ENCODE measurements at regions of chr2 and their contacts with region 1.

Region 1: DNA sequence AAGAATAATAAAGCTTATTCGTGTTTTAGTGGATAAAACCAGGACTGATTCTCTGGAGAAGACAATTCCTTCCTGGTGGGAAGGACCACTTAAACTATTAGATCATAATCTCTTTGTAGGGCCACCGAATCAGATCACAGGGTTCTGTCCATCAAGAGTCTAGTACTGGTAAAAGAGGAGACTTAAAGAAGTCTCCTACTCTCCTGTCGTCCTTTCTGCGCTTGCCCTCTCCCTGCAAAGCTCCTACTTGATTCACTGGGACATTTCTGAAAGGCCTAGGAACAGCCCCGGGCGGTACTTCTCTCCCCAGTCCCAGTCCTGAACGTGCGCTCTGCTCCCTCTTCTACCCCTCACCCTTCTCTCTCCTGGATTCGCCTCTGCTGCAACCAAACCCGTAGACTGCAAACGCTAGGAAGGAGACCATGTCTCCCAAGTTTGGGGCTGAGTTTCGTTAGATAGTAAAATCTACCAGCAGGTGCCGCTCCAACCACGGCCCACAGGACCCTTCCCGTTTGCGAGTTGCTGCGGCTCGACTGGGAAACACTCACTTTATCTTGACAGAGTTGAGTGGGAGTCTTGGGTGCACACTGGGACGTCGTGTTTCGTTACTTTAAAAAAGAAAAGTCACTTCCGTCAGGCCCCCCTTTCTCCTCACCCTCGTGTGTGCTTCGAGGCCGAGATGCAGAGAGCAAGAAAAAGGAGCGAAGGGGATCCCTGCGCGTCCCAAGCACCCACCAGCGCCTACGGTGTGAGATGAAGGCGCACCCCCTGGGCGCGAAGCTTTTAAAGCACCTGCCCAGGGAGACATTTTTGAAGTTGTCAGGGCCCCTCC is 923 bp downstream of the FIGLA start:
- DNase-seq: peak; percentile 58
- ATAC-seq: peak; percentile 96
- H3K4me3 ChIP-seq: no peak overlapping the region
- H3K27ac ChIP-seq: no peak overlapping the region
- H3K4me1 ChIP-seq: peaks cover 18% of the 10 kb centered on the region
- H3K27me3 ChIP-seq: peaks cover 0 to 5% of the 10 kb centered on the region in 2 experiments; a peak in 1 of 5 replicates
- CTCF ChIP-seq: peak; percentile 99
- EP300 ChIP-seq: no peak
- POLR2A ChIP-seq: no peak
- RAD21 ChIP-seq: peak; percentile 95

Region 2: GRCh38 chr2:70656421-70657010 is 133.0 kb before region 1 on chr2:
- CTCF ChIA-PET with region 1: interaction called, 10 read pairs
- POLR2A ChIA-PET with region 1: no interaction called
- in situ Hi-C with region 1: no loop called
- intact Hi-C with region 1: loop called (anchors 1 kb)
- DNase-seq: no peak
- ATAC-seq: no peak
- H3K4me3 ChIP-seq: no peak overlapping the region
- H3K27ac ChIP-seq: no peak overlapping the region
- H3K4me1 ChIP-seq: no peaks in the 10 kb centered on the region
- H3K27me3 ChIP-seq: peaks cover 3 to 40% of the 10 kb centered on the region in 2 experiments; a peak in 3 of 5 replicates
- CTCF ChIP-seq: no peak
- EP300 ChIP-seq: no peak
- POLR2A ChIP-seq: no peak
- RAD21 ChIP-seq: no peak

Region 3: GRCh38 chr2:70861777-70862625 is 72.5 kb after region 1 on chr2:
- CTCF ChIA-PET with region 1: interaction called, 37 read pairs
- POLR2A ChIA-PET with region 1: no interaction called
- in situ Hi-C with region 1: loop called (anchors 5 kb)
- intact Hi-C with region 1: loop called (anchors 1 kb)
- DNase-seq: peak; percentile 76
- ATAC-seq: peak; percentile 89
- H3K4me3 ChIP-seq: no peak overlapping the region
- H3K27ac ChIP-seq: no peak overlapping the region
- H3K4me1 ChIP-seq: peaks cover 25% of the 10 kb centered on the region
- H3K27me3 ChIP-seq: peaks cover 0 to 18% of the 10 kb centered on the region in 2 experiments; a peak in 3 of 5 replicates
- CTCF ChIP-seq: peak; percentile 97
- EP300 ChIP-seq: no peak
- POLR2A ChIP-seq: no peak
- RAD21 ChIP-seq: peak; percentile 87

Region 4: GRCh38 chr2:70919672-70920366 is 130.3 kb after region 1 on chr2:
- CTCF ChIA-PET with region 1: interaction called, 14 read pairs
- POLR2A ChIA-PET with region 1: no interaction called
- in situ Hi-C with region 1: no loop called
- intact Hi-C with region 1: loop called (anchors 2 kb)
- DNase-seq: peak; percentile 80
- ATAC-seq: peak; percentile 88
- H3K4me3 ChIP-seq: no peak overlapping the region
- H3K27ac ChIP-seq: no peak overlapping the region
- H3K4me1 ChIP-seq: peaks cover 22% of the 10 kb centered on the region
- H3K27me3 ChIP-seq: no peaks in the 10 kb centered on the region
- CTCF ChIP-seq: peak; percentile 97
- EP300 ChIP-seq: no peak
- POLR2A ChIP-seq: no peak
- RAD21 ChIP-seq: peak; percentile 95

Region 5: DNA sequence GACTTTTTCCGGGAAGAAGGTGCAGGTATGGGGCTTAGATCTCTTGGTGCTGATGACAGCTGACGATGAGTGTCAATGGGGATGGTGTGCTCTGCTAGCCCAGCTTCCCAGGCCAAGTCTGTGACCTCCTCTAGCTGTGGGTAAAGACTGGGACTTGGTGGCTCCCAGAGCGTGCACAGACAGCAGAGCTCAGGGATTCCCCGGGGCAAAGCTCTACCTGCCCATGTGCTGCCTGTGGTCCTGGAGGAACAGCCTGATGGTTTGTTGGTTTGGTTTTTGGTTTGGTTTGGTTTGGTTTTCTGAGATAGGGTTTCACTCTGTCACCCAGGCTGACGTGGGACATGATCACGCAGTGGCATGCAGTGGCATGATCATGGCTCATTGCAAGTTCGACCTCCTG is 165.4 kb after region 1 on chr2:
- CTCF ChIA-PET with region 1: no interaction called
- POLR2A ChIA-PET with region 1: no interaction called
- in situ Hi-C with region 1: no loop called
- intact Hi-C with region 1: no loop called
- DNase-seq: no peak
- ATAC-seq: no peak
- H3K4me3 ChIP-seq: no peak overlapping the region
- H3K27ac ChIP-seq: no peak overlapping the region
- H3K4me1 ChIP-seq: peaks cover 13% of the 10 kb centered on the region
- H3K27me3 ChIP-seq: peaks cover 1 to 6% of the 10 kb centered on the region in 2 experiments; a peak in 2 of 5 replicates
- CTCF ChIP-seq: no peak
- EP300 ChIP-seq: no peak
- POLR2A ChIP-seq: no peak
- RAD21 ChIP-seq: no peak

Region 6: GRCh38 chr2:71108091-71108490 is 318.6 kb after region 1 on chr2:
- CTCF ChIA-PET with region 1: no interaction called
- POLR2A ChIA-PET with region 1: no interaction called
- in situ Hi-C with region 1: no loop called
- intact Hi-C with region 1: no loop called
- DNase-seq: no peak
- ATAC-seq: no peak
- H3K4me3 ChIP-seq: no peak overlapping the region
- H3K27ac ChIP-seq: no peak overlapping the region
- H3K4me1 ChIP-seq: peaks cover 15% of the 10 kb centered on the region
- H3K27me3 ChIP-seq: no peaks in the 10 kb centered on the region
- CTCF ChIP-seq: no peak
- EP300 ChIP-seq: no peak
- POLR2A ChIP-seq: no peak
- RAD21 ChIP-seq: no peak

Region 7: DNA sequence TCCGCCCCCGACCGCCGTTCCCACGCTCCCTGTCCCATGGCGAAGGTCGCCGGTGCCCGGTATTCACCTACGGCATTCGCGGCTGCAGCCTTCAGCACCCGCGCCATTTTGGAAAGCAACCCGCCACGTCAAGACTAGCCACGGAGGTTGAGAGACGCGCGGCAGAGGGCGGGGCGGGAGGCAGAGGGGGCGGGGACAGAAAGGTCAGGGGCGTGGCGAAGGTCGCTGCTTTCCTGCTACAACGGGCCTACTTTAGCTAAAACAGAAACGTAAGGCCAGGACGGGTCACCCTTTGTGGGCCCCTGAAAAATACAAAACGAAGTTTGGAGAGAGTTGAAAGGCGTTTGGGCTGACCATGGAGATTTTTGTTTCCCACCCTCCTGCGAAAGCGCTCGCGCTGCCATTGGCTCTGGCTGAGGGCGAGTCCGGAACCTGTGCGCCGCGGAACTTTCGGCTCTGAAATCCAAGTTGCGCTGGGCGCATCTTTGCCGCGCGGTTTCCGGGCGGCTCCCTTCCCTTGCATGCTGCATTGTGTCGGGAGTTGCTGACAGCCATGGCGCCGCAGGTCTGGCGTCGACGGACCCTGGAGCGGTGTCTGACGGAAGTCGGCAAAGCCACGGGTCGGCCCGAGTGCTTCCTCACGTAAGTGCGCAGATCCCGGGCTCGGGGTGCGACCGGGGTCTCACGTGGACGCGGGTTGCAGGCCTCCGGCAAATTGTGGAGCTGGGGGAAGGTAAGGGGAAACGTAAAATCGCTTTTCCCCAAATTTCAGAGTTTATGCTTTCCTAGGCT is 340.8 kb after region 1 on chr2 and contains the starts of genes MCEE and MPHOSPH10:
- CTCF ChIA-PET with region 1: no interaction called
- POLR2A ChIA-PET with region 1: no interaction called
- in situ Hi-C with region 1: no loop called
- intact Hi-C with region 1: no loop called
- DNase-seq: peak; percentile 85
- ATAC-seq: peak; percentile 89
- H3K4me3 ChIP-seq: peak within 1 kb of the TSS; percentile 82 to 94 (median 86)
- H3K27ac ChIP-seq: peak within 1 kb of the TSS; percentile 96
- H3K4me1 ChIP-seq: peaks cover 68% of the 10 kb centered on the region
- H3K27me3 ChIP-seq: no peaks in the 10 kb centered on the region; a peak in 1 of 5 replicates
- CTCF ChIP-seq: peak; percentile 30
- EP300 ChIP-seq: peak in 1 of 2 experiments; percentile 65; a peak in 1 of 4 replicates
- POLR2A ChIP-seq: peak; percentile 84 to 88
- RAD21 ChIP-seq: peak; percentile 57; the same call in 1 of the 2 replicates
- total RNA-seq, gene MCEE: 56.1 and 66.9 TPM in 2 replicates
- total RNA-seq, gene MPHOSPH10: 137 and 201 TPM in 2 replicates

Measured in HepG2 (cell line).